ENCODE measurements at regions of chr3 and their contacts with region 1.

Region 1: DNA sequence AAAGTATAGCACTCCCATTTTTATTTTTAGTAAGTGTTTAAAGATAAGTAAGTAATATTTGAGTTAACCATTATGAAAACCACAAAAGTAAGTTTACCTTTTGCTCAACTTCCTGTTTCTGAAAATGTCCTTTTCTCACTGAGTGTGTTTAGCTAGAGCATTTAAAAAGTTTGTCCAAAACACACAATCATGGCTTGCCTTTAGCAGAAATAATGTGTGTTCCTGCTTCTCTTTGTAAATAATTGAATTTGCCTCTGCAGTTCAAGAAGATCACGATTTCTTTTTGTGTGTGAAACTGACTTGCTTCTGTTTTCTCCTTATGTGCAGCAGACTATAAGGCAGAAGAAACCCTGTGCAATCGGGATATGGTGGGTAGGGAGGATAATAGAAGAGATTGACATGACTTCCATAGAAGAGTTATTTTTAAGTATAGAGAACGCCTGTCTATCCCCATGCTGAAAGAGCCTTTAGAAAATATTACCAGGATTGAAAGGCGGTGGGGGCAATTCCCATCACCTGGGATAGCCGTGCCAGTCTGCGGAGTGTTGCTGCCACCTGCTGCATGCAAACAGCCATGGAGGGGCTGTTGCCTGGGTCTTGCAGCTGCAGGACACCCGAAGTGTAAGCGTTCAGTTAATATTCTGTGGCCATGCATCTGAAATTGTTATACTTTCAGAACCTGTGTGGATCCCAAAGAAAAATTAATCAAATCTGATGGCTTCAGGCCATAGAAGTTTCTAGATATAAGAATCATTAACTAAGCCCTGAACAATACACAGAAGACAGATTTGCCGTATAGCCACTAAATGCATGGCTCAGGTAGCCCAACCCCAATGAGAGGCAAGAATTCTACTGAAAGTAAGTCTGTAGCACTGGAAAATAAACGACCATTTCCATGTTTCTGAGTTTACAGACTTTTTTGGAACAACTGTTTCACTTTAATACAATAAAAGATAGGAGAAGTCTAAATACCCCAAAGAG is 2.4 kb upstream of the CD96 start:
- DNase-seq: peak; percentile 37 to 82 (median 64)
- ATAC-seq: peak; percentile 26
- H3K4me3 ChIP-seq: peak overlapping the region; percentile 37
- H3K4me3 Mint-ChIP-seq: peak overlapping the region; percentile 64
- H3K27ac ChIP-seq: peak overlapping the region in 1 of 2 donors; percentile 10
- H3K27ac Mint-ChIP-seq: no peak overlapping the region
- H3K4me1 ChIP-seq: peaks cover 31% of the 10 kb centered on the region
- H3K4me1 Mint-ChIP-seq: peaks cover 46% of the 10 kb centered on the region
- H3K27me3 ChIP-seq: no peaks in the 10 kb centered on the region
- H3K27me3 Mint-ChIP-seq: no peaks in the 10 kb centered on the region
- CTCF ChIP-seq: peak; percentile 96

Region 2: GRCh38 chr3:109532257-109533216 is 2007.1 kb before region 1 on chr3:
- CTCF ChIA-PET with region 1: no interaction called
- POLR2A ChIA-PET with region 1: no interaction called
- intact Hi-C with region 1: loop called in 1 of 2 experiments (anchors 10 kb)
- DNase-seq: peak in 13 of 14 experiments; percentile 4 to 67 (median 22)
- ATAC-seq: peak; percentile 52
- H3K4me3 ChIP-seq: no peak overlapping the region
- H3K4me3 Mint-ChIP-seq: no peak overlapping the region
- H3K27ac ChIP-seq: no peak overlapping the region
- H3K27ac Mint-ChIP-seq: no peak overlapping the region
- H3K4me1 ChIP-seq: no peaks in the 10 kb centered on the region
- H3K4me1 Mint-ChIP-seq: no peaks in the 10 kb centered on the region
- H3K27me3 ChIP-seq: no peaks in the 10 kb centered on the region
- H3K27me3 Mint-ChIP-seq: peaks cover 5% of the 10 kb centered on the region
- CTCF ChIP-seq: peak; percentile 29

Region 3: DNA sequence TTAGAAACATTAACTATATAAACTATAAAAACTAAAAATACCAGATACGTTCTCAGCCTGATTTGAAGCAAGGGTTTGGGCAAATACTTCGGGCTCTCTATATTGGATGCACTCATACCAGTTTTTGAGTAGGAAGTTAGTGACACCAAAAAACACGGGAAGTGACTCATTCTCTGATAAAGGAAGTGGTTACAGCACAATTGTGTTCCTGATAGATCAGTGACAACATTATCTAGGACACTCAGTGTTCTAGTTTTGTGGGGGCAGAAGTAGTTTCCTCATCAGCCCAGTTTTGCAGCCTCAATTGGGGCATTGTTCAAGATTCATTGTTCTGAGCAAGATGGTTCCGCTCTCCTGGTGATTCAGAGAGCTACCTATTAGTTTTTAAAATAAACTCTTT is 1732.7 kb before region 1 on chr3:
- CTCF ChIA-PET with region 1: no interaction called
- POLR2A ChIA-PET with region 1: interaction called, 3 read pairs
- intact Hi-C with region 1: loop called in 1 of 2 experiments (anchors 10 kb)
- DNase-seq: peak in 12 of 14 experiments; percentile 3 to 92 (median 25)
- ATAC-seq: peak; percentile 89
- H3K4me3 ChIP-seq: peak overlapping the region; percentile 24
- H3K4me3 Mint-ChIP-seq: peak overlapping the region; percentile 78
- H3K27ac ChIP-seq: peak overlapping the region; percentile 64 to 65
- H3K27ac Mint-ChIP-seq: peak overlapping the region; percentile 79
- H3K4me1 ChIP-seq: peaks cover 25% of the 10 kb centered on the region
- H3K4me1 Mint-ChIP-seq: peaks cover 52% of the 10 kb centered on the region
- H3K27me3 ChIP-seq: no peaks in the 10 kb centered on the region
- H3K27me3 Mint-ChIP-seq: no peaks in the 10 kb centered on the region
- CTCF ChIP-seq: no peak

Region 4: DNA sequence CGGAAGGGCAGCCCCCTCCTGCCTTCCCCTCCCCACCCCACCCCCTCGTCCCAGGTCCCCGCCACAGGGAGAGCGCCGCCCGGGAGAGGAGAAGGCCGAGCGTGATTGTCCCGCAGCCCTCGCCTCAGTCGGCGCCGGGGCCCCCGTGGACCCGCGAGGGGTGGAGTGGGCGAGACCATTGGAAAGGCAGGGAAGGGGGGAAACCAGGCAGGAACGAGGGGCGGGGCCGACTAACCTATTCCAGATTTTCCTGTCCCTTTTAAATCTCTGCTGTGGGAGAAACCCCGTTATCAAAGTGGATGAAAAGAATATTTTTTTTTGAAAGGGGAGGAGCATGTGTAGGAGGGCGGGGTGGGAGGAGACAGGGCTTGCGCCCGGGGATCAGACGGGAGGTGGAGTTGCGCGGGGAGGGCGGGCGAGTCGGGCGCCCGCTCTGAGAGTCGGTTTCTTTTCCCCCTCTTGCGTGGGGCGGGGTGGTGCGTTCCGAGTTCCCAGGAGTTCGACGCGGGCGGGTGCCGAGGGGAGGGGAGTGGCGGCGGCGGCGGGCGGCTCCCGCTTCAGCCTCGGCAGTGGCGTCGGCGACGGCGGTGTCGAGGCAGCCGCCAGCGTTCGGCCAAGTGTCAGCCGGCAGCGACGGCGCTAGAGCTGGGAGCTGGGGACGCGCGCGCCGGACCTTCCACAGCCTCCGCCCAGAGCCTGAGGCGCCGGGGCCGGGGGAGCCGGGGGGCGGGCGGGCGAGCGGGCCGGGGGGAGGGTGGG is 468.2 kb before region 1 on chr3 and contains the start of gene NECTIN3:
- CTCF ChIA-PET with region 1: no interaction called
- POLR2A ChIA-PET with region 1: interaction called, 4 read pairs
- intact Hi-C with region 1: loop called (anchors 5 kb)
- DNase-seq: peak; percentile 71 to 95 (median 83)
- ATAC-seq: peak; percentile 93
- H3K4me3 ChIP-seq: peak within 1 kb of the TSS; percentile 78
- H3K4me3 Mint-ChIP-seq: peak within 1 kb of the TSS; percentile 97
- H3K27ac ChIP-seq: no peak within 1 kb of the TSS
- H3K27ac Mint-ChIP-seq: peak within 1 kb of the TSS; percentile 90
- H3K4me1 ChIP-seq: peaks cover 19% of the 10 kb centered on the region
- H3K4me1 Mint-ChIP-seq: peaks cover 44% of the 10 kb centered on the region
- H3K27me3 ChIP-seq: peaks cover 0 to 18% of the 10 kb centered on the region in 2 experiments
- H3K27me3 Mint-ChIP-seq: peaks cover 35% of the 10 kb centered on the region
- CTCF ChIP-seq: no peak
- total RNA-seq, gene NECTIN3: 7.8 to 8.5 TPM

Region 5: GRCh38 chr3:111392901-111393351 is 146.7 kb before region 1 on chr3:
- CTCF ChIA-PET with region 1: interaction called, 3 read pairs
- POLR2A ChIA-PET with region 1: no interaction called
- intact Hi-C with region 1: loop called in 1 of 2 experiments (anchors 5 kb)
- DNase-seq: peak in 13 of 14 experiments; percentile 9 to 85 (median 23)
- ATAC-seq: peak; percentile 96
- H3K4me3 ChIP-seq: no peak overlapping the region
- H3K4me3 Mint-ChIP-seq: no peak overlapping the region
- H3K27ac ChIP-seq: no peak overlapping the region
- H3K27ac Mint-ChIP-seq: peak overlapping the region; percentile 76
- H3K4me1 ChIP-seq: no peaks in the 10 kb centered on the region
- H3K4me1 Mint-ChIP-seq: peaks cover 33% of the 10 kb centered on the region
- H3K27me3 ChIP-seq: no peaks in the 10 kb centered on the region
- H3K27me3 Mint-ChIP-seq: no peaks in the 10 kb centered on the region
- CTCF ChIP-seq: no peak

Region 6: DNA sequence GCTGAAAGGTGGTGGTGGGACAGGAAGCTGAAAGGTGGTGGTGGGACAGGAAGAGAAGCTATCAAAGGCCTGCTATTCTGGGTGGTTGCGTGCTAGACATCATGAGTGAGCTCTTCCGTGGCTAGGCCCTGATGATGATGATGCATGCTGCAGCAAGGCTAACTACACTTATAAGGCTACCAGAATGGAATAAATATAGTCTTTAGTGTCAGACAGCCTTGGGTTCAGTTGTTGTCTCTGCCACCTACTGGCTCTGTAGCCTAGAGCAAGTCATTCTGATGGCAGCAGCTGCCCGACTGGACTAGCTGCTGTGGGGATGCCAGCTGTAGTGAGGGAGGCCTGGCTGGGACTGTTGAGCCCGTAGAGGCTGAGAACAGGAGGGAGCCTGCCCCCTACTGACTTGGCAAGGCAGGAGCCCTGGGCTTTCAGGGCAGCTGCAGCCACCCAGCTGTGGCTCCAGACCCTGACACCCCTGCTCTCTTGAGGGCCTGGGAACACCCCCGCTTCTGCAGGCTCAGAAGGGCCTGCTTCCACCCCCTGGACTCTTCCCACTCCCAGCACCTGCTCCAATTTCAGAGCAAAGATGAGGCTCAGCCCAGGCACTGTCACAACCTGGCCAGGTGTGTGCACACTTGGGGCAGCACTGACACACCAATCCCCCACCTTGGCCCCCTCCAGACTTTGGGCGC is 76.9 kb after region 1 on chr3:
- CTCF ChIA-PET with region 1: interaction called, 25 read pairs
- POLR2A ChIA-PET with region 1: interaction called, 10 read pairs
- intact Hi-C with region 1: loop called in 1 of 2 experiments (anchors 1 kb)
- DNase-seq: peak in 13 of 14 experiments; percentile 16 to 88 (median 46)
- ATAC-seq: peak; percentile 94
- H3K4me3 ChIP-seq: no peak overlapping the region
- H3K4me3 Mint-ChIP-seq: peak overlapping the region; percentile 26
- H3K27ac ChIP-seq: peak overlapping the region; percentile 27 to 60
- H3K27ac Mint-ChIP-seq: peak overlapping the region; percentile 86
- H3K4me1 ChIP-seq: peaks cover 32% of the 10 kb centered on the region
- H3K4me1 Mint-ChIP-seq: peaks cover 60% of the 10 kb centered on the region
- H3K27me3 ChIP-seq: no peaks in the 10 kb centered on the region
- H3K27me3 Mint-ChIP-seq: no peaks in the 10 kb centered on the region
- CTCF ChIP-seq: peak; percentile 31

Measured in CD4-positive, alpha-beta T cell (primary cell).